ENCODE measurements at regions of chr2 and their contacts with region 1.

Region 1: DNA sequence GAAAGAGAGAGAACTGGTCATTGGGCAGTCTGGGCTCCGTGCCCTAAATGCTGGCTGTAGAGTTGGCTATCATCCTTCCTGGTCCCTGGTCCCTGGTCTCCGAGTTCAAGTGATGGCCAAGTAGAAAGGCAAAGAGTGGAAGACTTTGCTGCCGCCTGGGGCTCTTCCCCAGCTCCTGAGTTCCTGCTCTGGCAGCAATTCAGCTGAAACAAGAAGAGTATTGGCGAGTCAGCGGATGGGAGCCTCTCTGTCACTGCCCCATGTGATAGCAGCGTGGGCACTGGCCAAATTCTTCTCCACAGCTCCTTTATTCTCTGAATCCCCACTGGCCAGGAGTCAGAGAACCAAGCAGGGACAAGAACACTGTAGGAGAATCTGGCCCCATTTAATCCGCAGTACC is 351.0 kb upstream of the POU3F3 start:
- DNase-seq: peak; percentile 29 to 94 (median 89)
- H3K4me3 ChIP-seq: peak overlapping the region in 54 of 59 donors; percentile 3 to 62 (median 40)
- H3K27ac ChIP-seq: peak overlapping the region; percentile 33 to 96 (median 89)
- H3K27me3 ChIP-seq: no peaks in the 10 kb centered on the region
- CTCF ChIP-seq: peak in 43 of 56 donors; percentile 2 to 66 (median 37)

Region 2: DNA sequence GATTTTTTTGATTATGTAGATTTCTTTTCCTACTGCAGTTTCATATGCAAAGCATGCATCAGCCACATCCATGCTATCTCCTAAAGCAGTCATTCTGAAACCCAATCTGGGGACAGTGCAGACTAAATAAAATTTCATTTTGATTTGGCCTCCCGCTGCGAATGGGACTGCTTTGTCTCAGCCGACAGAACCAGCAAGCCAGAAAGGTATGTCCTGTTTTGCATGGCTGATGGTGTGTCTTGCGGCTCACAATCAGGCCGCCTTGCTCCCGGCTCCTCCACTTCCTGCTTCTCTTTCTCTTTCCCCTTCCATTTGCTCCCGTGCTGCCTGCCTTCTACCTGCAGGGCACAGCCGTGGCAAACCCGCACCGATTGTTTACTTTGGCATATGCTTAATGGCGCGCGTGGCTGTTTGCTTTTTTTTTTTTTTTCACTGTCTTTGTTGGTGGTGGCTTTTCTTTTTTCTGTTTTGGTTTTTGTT is 68.5 kb before region 1 on chr2:
- intact Hi-C with region 1: loop called (anchors 1 to 5 kb)
- DNase-seq: peak in 5 of 10 donors; percentile 42 to 59 (median 48)
- H3K4me3 ChIP-seq: peak overlapping the region; percentile 32 to 71 (median 56)
- H3K27ac ChIP-seq: peak overlapping the region; percentile 29 to 97 (median 91)
- H3K27me3 ChIP-seq: no peaks in the 10 kb centered on the region
- CTCF ChIP-seq: peak in 6 of 56 donors; percentile 11 to 22 (median 14)

Region 3: DNA sequence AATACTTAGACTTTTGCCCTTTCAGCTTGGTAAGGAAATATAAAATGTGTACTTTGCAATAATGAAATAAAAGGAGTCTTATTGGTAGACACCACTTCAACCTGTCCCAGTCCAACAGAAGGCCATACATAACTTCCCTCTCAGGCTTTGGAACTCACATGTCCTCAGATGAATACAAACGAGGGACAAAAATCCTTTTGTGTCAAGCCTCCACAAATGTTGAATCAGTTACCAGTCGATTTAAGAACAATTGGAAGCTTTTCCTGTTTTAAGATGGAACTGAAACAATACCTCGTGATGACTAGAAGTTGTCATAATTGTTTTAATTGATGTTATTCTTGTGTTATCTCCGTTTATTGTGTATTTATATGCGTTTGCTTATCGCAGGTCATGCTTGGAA is 34.1 kb before region 1 on chr2:
- intact Hi-C with region 1: loop called in 1 of 2 experiments (anchors 2 kb)
- DNase-seq: no peak
- H3K4me3 ChIP-seq: peak overlapping the region in 7 of 59 donors; percentile 10 to 30 (median 24)
- H3K27ac ChIP-seq: peak overlapping the region in 55 of 59 donors; percentile 7 to 94 (median 76)
- H3K27me3 ChIP-seq: peaks cover 0 to 3% (median 0%) of the 10 kb centered on the region in 45 donors
- CTCF ChIP-seq: no peak

Region 4: GRCh38 chr2:104658144-104658835 is 155.4 kb after region 1 on chr2:
- intact Hi-C with region 1: loop called in 1 of 2 experiments (anchors 10 kb)
- DNase-seq: peak in 8 of 10 donors; percentile 23 to 56 (median 50)
- H3K4me3 ChIP-seq: peak overlapping the region in 34 of 59 donors; percentile 13 to 73 (median 61)
- H3K27ac ChIP-seq: peak overlapping the region in 35 of 59 donors; percentile 0 to 80 (median 53)
- H3K27me3 ChIP-seq: peaks cover 0 to 11% (median 0%) of the 10 kb centered on the region in 45 donors
- CTCF ChIP-seq: no peak

Region 5: DNA sequence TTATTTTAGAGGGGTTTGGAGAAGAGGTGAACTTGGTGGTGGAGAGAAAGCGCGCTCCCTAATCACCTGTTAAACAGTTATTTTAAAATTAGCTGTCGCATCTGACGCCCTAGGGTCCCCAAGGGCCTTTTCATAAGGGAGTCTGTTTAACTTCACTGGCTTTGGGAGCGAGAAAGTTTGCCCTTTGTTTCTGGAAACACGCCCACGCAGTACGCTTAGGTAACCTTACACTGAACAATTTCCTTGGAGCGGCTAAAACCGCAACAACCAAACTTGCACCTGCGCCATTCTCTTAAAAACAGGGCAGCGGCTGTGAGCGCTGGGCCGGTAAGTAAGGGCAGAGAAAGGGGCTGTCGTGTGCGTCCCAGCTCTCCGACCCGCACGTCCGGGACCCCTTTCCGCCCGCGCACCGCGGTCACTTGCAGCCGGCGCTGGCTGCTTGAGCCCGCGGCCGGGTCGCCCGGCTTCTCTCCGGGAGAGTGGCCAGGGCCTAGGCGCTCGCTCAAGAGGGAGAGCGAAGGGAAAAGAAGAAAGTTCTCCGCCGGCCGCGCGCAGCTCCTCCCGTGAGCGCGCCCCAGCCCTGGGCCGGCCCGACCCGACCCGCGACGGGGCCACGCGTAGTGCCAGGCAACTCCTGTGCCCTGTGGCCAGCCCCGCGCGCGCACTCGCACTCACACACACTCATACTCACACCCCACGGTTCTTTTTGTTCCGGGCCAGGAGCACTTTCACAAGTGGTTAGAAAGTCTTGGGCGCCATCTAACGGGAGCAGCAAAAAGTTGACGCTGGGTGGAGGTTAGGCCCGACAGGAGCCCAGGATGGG is 370.2 kb after region 1 on chr2:
- intact Hi-C with region 1: loop called in 1 of 2 experiments (anchors 5 kb)
- DNase-seq: peak; percentile 59 to 94 (median 92)
- H3K4me3 ChIP-seq: peak overlapping the region; percentile 47 to 82 (median 71)
- H3K27ac ChIP-seq: peak overlapping the region; percentile 68 to 99 (median 95)
- H3K27me3 ChIP-seq: peaks cover 0 to 8% (median 0%) of the 10 kb centered on the region in 45 donors
- CTCF ChIP-seq: peak; percentile 34 to 93 (median 80)